ENCODE measurements at regions of chr13 and their contacts with region 1.

Region 1: GRCh38 chr13:20127577-20128466 is 33.0 kb downstream of the GJA3 start:
- DNase-seq: peak in 1 of 2 donors; percentile 83
- H3K4me3 ChIP-seq: peak overlapping the region; percentile 83 to 84
- H3K27ac ChIP-seq: peak overlapping the region; percentile 90
- H3K4me1 ChIP-seq: peaks cover 0 to 13% of the 10 kb centered on the region in 2 donors
- H3K27me3 ChIP-seq: no peaks in the 10 kb centered on the region
- CTCF ChIP-seq: peak in 2 of 3 experiments; percentile 32 to 54

Region 2: GRCh38 chr13:20703780-20704445 is 576.1 kb after region 1 on chr13:
- intact Hi-C with region 1: loop called (anchors 10 kb)
- DNase-seq: peak in 1 of 2 donors; percentile 84
- H3K4me3 ChIP-seq: peak overlapping the region; percentile 70 to 95
- H3K27ac ChIP-seq: peak overlapping the region in 1 of 2 donors; percentile 38
- H3K4me1 ChIP-seq: peaks cover 3% of the 10 kb centered on the region in 2 donors
- H3K27me3 ChIP-seq: no peaks in the 10 kb centered on the region
- CTCF ChIP-seq: peak; percentile 16 to 81 (median 42)

Measured in ascending aorta (tissue), 2 donors.